ENCODE measurements at regions of chrX and their contacts with region 1.

Region 1: GRCh38 chrX:154762523-154763289 is at the start of gene DKC1:
- DNase-seq: peak; percentile 88
- ATAC-seq: peak; percentile 94
- H3K4me3 ChIP-seq: peak within 1 kb of the TSS; percentile 46 to 69 (median 65); a peak in 5 of 6 replicates
- H3K27ac ChIP-seq: peak within 1 kb of the TSS; percentile 77
- H3K4me1 ChIP-seq: peaks cover 27% of the 10 kb centered on the region
- H3K27me3 ChIP-seq: no peaks in the 10 kb centered on the region; a peak in 1 of 5 replicates
- CTCF ChIP-seq: 0 out of 2 replicates have a peak, but pooled peaks have one; percentile 1
- EP300 ChIP-seq: no peak
- POLR2A ChIP-seq: peak; percentile 47 to 81; a peak in 3 of 4 replicates
- RAD21 ChIP-seq: no peak
- total RNA-seq, gene DKC1: 102 and 150 TPM in 2 replicates

Region 2: GRCh38 chrX:154799554-154800348 is 37.0 kb after region 1 on chrX:
- CTCF ChIA-PET with region 1: no interaction called
- POLR2A ChIA-PET with region 1: interaction called, 23 read pairs
- in situ Hi-C with region 1: no loop called
- intact Hi-C with region 1: loop called (anchors 1 kb)
- DNase-seq: peak; percentile 90
- ATAC-seq: peak; percentile 94
- H3K4me3 ChIP-seq: peak overlapping the region in 1 of 3 experiments; percentile 43; a peak in 1 of 6 replicates
- H3K27ac ChIP-seq: peak overlapping the region; percentile 74
- H3K4me1 ChIP-seq: peaks cover 87% of the 10 kb centered on the region
- H3K27me3 ChIP-seq: no peaks in the 10 kb centered on the region
- CTCF ChIP-seq: no peak
- EP300 ChIP-seq: peak in 1 of 2 experiments; percentile 77; a peak in 2 of 4 replicates
- POLR2A ChIP-seq: no peak
- RAD21 ChIP-seq: no peak

Region 3: DNA sequence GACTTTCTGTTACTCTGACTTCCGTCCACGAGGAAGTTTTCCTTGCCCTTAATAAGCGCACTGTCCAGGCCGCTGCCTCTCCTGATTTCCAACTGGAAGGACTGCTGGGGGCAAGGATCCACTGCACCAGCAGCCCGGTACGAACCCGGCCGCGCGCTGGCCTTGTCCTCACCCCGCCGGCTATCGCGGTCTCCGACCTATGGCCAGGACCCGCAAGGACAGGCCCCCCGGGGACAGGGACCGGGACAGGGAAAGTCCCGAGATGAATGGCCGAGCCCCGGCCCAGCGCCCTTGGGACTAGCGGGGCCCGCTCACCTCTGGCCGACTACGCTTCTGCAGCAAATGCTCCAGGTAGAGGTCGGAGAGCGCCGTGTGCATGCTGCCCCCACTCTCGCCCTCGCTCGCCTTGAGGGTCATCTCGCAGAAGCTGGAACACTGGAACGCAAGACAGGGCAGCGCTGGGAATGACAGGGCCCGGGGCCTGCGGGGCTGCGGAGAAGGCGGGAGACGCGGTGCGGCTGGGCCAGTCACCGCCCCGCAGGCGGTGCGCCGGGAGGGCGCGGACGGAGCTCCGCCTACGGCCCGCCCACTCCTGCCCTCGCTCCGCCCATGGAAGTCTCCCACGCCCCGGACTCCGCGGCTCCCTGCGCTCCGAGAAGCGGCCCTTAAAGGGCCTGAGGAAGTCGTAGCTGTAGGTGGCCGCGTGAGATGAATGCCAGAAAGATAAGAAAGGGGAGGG is 42.4 kb after region 1 on chrX and contains the start of gene MPP1:
- CTCF ChIA-PET with region 1: no interaction called
- POLR2A ChIA-PET with region 1: interaction called, 23 read pairs
- in situ Hi-C with region 1: no loop called
- intact Hi-C with region 1: no loop called
- DNase-seq: no peak
- ATAC-seq: peak; percentile 97
- H3K4me3 ChIP-seq: peak within 1 kb of the TSS; percentile 59 to 73 (median 64)
- H3K27ac ChIP-seq: peak within 1 kb of the TSS; percentile 48
- H3K4me1 ChIP-seq: peaks cover 49% of the 10 kb centered on the region
- H3K27me3 ChIP-seq: 0 out of 5 replicates have a peak, but pooled peaks cover 0 to 4% of the 10 kb centered on the region in 2 experiments
- CTCF ChIP-seq: no peak
- EP300 ChIP-seq: no peak
- POLR2A ChIP-seq: peak in 1 of 2 experiments; percentile 45; a peak in 1 of 4 replicates
- RAD21 ChIP-seq: no peak
- total RNA-seq, gene MPP1: 8.1 and 9.4 TPM in 2 replicates

Region 4: GRCh38 chrX:154827194-154828015 is 64.7 kb after region 1 on chrX:
- CTCF ChIA-PET with region 1: no interaction called
- POLR2A ChIA-PET with region 1: no interaction called
- in situ Hi-C with region 1: no loop called
- intact Hi-C with region 1: no loop called
- DNase-seq: no peak
- ATAC-seq: no peak
- H3K4me3 ChIP-seq: no peak overlapping the region
- H3K27ac ChIP-seq: no peak overlapping the region
- H3K4me1 ChIP-seq: no peaks in the 10 kb centered on the region
- H3K27me3 ChIP-seq: no peaks in the 10 kb centered on the region
- CTCF ChIP-seq: no peak
- EP300 ChIP-seq: no peak
- POLR2A ChIP-seq: no peak
- RAD21 ChIP-seq: no peak

Region 5: DNA sequence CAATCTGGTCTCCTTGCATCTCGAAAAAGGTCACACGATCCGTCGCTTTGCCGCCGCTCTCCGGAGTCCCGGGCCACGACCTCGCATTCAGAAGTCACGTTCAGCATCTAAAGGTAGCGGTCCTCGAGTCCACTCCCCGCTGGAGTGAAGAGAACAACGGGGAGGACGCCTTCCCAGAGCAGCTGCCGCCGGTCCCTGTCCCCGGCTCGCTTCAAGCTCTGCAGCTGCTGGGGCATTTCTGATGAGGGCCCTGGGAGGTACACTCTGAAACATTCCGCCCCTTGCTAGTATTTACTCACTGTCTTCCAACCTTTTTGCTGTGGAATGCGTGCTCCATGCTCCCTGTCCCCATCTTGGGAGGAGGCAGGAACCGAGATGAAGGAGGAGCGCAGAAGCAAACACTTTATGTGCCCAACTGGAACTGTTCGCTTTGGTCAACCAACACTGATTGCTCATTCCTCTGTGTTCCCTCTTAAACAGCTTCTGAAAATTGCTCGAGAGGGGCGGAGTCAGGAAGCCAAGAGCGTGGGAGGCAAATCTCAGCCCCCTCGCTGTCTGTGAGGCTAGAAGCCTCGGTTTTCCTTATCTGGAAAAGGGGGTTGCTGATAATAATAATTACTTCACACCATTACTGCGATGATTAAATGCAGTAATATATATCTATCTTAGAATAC is 1112.0 kb after region 1 on chrX:
- CTCF ChIA-PET with region 1: no interaction called
- POLR2A ChIA-PET with region 1: no interaction called
- in situ Hi-C with region 1: no loop called
- intact Hi-C with region 1: no loop called
- DNase-seq: no peak
- ATAC-seq: peak; percentile 57
- H3K4me3 ChIP-seq: peak overlapping the region in 1 of 3 experiments; percentile 37; a peak in 1 of 6 replicates
- H3K27ac ChIP-seq: no peak overlapping the region
- H3K4me1 ChIP-seq: no peaks in the 10 kb centered on the region
- H3K27me3 ChIP-seq: peaks cover 1 to 4% of the 10 kb centered on the region in 2 experiments; a peak in 1 of 5 replicates
- CTCF ChIP-seq: no peak
- EP300 ChIP-seq: no peak
- POLR2A ChIP-seq: no peak
- RAD21 ChIP-seq: no peak